ENCODE measurements at regions of chr1 and their contacts with region 1.

Region 1: DNA sequence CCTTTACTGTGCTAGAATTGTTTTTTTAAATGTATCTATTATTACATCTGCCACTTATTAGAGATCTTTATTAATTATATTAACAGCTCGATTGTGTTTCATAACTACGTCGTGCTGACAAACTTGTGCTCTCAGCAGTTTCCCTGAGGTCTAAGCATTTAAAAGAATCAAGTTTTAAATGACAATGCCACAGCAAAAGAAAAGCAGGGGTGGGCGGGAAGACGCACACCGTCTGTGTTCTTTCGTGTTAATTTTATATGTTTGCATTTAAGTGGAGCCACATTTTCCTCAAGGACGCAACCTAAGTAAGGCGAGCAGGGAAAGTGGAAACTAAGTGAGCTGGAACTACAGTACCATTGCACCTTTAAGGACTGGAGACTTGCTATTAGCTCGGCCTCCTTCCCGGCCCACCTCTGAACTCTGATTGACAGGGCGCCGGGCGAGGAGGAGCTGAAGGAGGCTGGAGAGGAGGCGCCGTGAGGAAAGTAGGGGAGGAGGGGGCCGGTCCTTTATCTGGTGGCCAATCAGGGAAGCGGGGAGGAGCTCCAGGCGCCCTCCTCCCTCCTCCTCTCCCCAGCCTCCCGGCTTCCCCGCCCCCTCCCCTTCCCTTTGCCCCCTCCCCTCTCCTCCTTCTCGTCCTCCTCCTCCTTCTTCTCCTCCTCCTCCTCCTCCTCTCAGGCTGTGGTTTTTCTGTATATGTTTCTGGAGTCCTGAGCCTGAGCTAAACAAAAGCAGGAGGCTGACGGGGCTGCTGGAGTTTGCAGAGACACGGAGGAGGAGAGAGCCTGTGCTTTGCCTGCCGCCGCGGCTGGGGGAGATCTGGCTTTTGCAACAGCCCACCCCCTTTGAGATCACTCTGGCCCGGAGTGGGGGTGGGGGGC is at the start of gene PBX1:
- DNase-seq: peak; percentile 100
- H3K4me3 Mint-ChIP-seq: peak within 1 kb of the TSS; percentile 89
- H3K27ac Mint-ChIP-seq: peak within 1 kb of the TSS; percentile 99
- H3K4me1 Mint-ChIP-seq: peaks cover 17% of the 10 kb centered on the region
- H3K27me3 Mint-ChIP-seq: no peaks in the 10 kb centered on the region
- CTCF ChIP-seq: no peak
- total RNA-seq, gene PBX1: 2.3 and 5.8 TPM in 2 replicates

Region 2: DNA sequence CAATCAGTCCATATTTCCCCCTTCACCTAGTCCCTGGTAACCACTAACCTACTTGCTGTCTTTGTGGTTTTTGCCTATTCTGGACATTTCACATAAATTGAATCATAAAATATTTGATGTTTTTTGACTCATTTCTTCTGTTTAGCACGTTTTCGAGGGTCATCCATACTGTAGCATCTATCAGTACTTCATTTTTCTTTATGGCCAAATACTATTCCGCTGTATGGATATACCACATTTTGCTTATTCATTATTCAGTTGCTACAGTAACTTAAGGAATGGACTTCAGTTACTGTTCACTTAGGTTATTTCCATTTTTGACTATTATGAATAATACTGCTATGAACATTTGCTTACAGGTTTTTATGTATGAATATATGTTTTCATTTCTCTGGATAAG is 12.6 kb after region 1 on chr1:
- CTCF ChIA-PET with region 1: interaction called, 4 read pairs
- POLR2A ChIA-PET with region 1: interaction called, 15 read pairs
- intact Hi-C with region 1: no loop called
- DNase-seq: no peak
- H3K4me3 Mint-ChIP-seq: no peak overlapping the region
- H3K27ac Mint-ChIP-seq: no peak overlapping the region
- H3K4me1 Mint-ChIP-seq: peaks cover 6% of the 10 kb centered on the region
- H3K27me3 Mint-ChIP-seq: no peaks in the 10 kb centered on the region
- CTCF ChIP-seq: no peak

Region 3: DNA sequence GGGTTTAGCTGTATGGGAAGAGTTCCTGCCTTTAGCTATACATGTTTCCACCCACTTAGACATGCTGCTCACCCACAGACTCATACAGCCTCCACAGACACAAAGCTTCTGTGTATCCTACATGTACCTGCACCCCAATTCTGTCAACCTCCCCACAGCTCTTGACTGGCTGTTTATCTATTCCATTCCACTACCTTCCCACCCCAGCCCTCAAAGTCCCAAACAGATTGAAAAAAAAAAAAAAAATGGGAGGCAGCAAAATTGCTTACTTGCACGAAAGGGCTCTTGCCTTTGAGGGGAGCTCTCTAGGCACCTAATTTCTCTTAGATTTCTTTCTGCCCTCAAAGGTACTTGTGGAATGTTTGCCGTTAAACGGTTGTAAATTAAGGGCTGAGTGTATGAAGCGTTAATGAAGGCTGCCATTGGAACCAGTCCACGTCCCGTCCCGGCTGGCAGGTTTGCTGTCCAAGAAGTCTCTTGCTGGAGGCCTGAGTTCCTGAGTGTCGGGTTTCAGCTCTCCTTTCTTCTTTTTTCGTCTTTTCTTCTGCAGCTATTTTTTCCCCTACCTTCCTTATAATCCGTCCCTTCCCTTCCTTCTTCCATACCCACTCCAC is 43.9 kb after region 1 on chr1:
- CTCF ChIA-PET with region 1: interaction called, 3 read pairs
- POLR2A ChIA-PET with region 1: interaction called, 10 read pairs
- intact Hi-C with region 1: no loop called
- DNase-seq: peak; percentile 50
- H3K4me3 Mint-ChIP-seq: peak overlapping the region; percentile 13
- H3K27ac Mint-ChIP-seq: peak overlapping the region; percentile 50
- H3K4me1 Mint-ChIP-seq: peaks cover 17% of the 10 kb centered on the region
- H3K27me3 Mint-ChIP-seq: no peaks in the 10 kb centered on the region
- CTCF ChIP-seq: no peak

Region 4: GRCh38 chr1:164611754-164612642 is 53.3 kb after region 1 on chr1:
- CTCF ChIA-PET with region 1: interaction called, 7 read pairs
- POLR2A ChIA-PET with region 1: interaction called, 65 read pairs
- intact Hi-C with region 1: loop called (anchors 1 kb)
- DNase-seq: peak; percentile 99
- H3K4me3 Mint-ChIP-seq: peak overlapping the region; percentile 62
- H3K27ac Mint-ChIP-seq: peak overlapping the region; percentile 55
- H3K4me1 Mint-ChIP-seq: peaks cover 25% of the 10 kb centered on the region
- H3K27me3 Mint-ChIP-seq: no peaks in the 10 kb centered on the region
- CTCF ChIP-seq: no peak

Region 5: DNA sequence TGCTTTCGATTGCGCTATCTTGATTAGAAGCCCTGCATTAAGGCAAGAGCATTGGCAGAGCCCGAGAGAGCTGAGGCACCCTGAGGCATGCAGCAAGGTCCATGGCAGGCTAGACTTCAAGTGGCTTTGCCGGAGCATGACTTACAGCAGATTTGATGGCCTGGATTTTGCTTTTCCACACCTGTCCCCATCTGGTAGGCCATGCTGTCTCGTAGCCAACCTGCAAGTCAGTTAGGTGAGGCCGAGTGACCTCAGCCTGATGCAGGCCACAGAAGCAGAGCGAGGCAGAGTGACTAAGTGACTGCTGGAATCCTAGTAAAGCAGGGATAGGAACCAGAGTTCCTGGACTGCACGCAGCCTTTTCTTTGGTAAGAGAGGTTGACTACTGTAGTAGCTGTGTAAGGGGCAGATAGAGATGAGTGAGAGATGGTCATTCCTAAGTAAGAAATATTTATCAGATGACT is 149.2 kb after region 1 on chr1:
- CTCF ChIA-PET with region 1: no interaction called
- POLR2A ChIA-PET with region 1: interaction called, 9 read pairs
- intact Hi-C with region 1: loop called (anchors 5 kb)
- DNase-seq: peak; percentile 67
- H3K4me3 Mint-ChIP-seq: no peak overlapping the region
- H3K27ac Mint-ChIP-seq: peak overlapping the region; percentile 70
- H3K4me1 Mint-ChIP-seq: peaks cover 22% of the 10 kb centered on the region
- H3K27me3 Mint-ChIP-seq: no peaks in the 10 kb centered on the region
- CTCF ChIP-seq: no peak

Region 6: GRCh38 chr1:164772635-164773034 is 213.9 kb after region 1 on chr1:
- CTCF ChIA-PET with region 1: interaction called, 4 read pairs
- POLR2A ChIA-PET with region 1: interaction called, 50 read pairs
- intact Hi-C with region 1: loop called (anchors 2 kb)
- DNase-seq: peak; percentile 95
- H3K4me3 Mint-ChIP-seq: no peak overlapping the region
- H3K27ac Mint-ChIP-seq: peak overlapping the region; percentile 85
- H3K4me1 Mint-ChIP-seq: peaks cover 54% of the 10 kb centered on the region
- H3K27me3 Mint-ChIP-seq: no peaks in the 10 kb centered on the region
- CTCF ChIP-seq: no peak

Region 7: DNA sequence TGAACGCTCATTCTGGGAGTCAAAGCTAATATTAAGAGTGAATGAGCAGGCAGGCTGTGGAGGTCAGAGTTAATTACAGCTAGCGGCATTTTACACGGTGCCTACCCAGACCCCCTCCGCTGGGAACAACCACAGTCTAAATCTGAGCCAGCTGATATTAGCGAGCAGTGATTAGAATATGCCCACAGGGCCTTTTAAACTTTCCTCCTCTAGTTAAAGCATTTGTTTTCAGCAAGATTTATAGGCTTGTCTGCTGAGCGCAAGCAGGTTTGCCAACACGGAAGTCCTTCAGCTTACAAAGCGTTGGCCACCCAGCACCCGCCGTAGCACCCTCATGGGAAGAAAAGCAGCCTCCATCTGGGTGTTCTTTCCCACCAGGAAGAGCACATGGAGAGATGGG is 725.8 kb after region 1 on chr1:
- CTCF ChIA-PET with region 1: no interaction called
- POLR2A ChIA-PET with region 1: no interaction called
- intact Hi-C with region 1: no loop called
- DNase-seq: no peak
- H3K4me3 Mint-ChIP-seq: no peak overlapping the region
- H3K27ac Mint-ChIP-seq: no peak overlapping the region
- H3K4me1 Mint-ChIP-seq: no peaks in the 10 kb centered on the region
- H3K27me3 Mint-ChIP-seq: peaks cover 30% of the 10 kb centered on the region
- CTCF ChIP-seq: no peak

Measured in MCF 10A (cell line).